ENCODE measurements at regions of chr5 and their contacts with region 1.

Region 1: DNA sequence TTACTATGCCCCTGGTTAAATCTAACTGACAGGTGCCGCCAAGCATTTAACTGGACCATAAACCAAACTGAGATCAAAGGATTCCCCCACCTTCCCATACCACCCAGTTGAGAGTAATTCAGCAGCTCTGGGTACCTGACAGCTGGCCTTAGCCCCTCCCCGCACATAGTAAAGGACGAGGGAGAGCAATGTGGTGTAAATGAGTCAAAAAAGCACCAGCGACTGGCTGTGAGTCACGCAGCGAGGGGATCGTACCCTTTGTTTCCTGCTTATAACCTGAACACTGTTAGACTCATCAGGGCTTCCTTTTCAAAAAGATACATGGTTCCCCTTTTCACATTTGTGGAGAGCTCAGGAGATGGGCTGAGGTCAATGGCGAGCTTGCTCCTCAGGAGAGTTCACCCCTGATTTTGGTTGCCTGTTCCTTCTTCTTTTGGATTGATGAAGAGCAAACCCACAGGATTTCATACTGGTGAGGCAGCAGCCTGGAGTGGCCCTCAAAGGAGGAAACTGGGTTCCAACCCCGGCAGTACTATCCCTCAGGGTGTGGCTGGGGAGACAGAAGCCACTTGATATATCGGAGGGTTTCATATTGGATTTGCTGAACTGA is 71.5 kb downstream of the ANKRD33B start:
- DNase-seq: peak; percentile 93
- H3K4me3 Mint-ChIP-seq: peak overlapping the region; percentile 77
- H3K27ac Mint-ChIP-seq: peak overlapping the region; percentile 98
- H3K4me1 Mint-ChIP-seq: peaks cover 62% of the 10 kb centered on the region
- H3K27me3 Mint-ChIP-seq: no peaks in the 10 kb centered on the region

Region 2: DNA sequence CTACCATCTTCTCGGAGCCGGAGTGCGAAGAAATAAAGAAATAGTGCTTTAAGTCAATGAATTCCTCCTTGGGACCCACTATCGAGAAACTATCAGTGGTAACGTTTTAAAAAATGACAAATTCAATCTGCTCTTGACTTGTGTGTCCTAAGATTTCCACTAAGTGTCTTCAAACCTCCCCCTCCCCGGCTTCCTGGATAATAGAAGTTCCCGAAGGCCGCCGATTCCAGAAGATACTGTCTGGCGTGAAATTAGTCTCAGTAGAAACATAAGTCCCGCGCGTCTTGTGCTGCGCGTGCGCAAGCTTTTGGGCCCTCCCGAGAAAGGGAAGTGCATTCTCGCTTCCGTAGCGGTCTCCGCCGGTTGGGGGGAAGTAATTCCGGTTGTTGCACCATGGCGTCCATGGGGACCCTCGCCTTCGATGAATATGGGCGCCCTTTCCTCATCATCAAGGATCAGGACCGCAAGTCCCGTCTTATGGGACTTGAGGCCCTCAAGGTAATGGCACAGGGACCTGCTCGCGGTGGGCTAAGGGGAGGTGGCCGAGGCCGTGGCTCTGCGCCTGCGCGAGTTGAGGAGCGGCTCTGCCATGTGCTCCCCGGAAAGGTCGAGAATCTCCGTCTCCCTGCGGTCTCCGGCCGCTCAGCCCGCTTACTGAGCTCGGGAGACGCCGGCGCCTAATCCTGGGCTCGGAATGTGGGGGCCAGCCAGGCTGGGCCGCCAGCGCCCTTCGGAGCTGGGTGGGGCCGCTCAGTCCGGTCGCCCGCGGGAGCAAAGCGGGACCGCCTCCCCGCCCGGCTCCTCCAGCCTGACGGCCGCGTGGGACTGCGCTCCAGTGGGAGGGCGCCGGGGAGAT is 385.2 kb before region 1 on chr5 and contains the start of gene CCT5:
- CTCF ChIA-PET with region 1: no interaction called
- POLR2A ChIA-PET with region 1: interaction called, 4 read pairs
- intact Hi-C with region 1: loop called (anchors 5 kb)
- DNase-seq: peak; percentile 93
- H3K4me3 Mint-ChIP-seq: peak within 1 kb of the TSS; percentile 84
- H3K27ac Mint-ChIP-seq: peak within 1 kb of the TSS; percentile 99
- H3K4me1 Mint-ChIP-seq: peaks cover 47% of the 10 kb centered on the region
- H3K27me3 Mint-ChIP-seq: no peaks in the 10 kb centered on the region
- total RNA-seq, gene CCT5: 360 to 375 TPM

Region 3: GRCh38 chr5:10441083-10441991 is 194.0 kb before region 1 on chr5 and contains the start of gene ROPN1L:
- CTCF ChIA-PET with region 1: interaction called, 154 read pairs
- POLR2A ChIA-PET with region 1: no interaction called
- intact Hi-C with region 1: loop called (anchors 5 kb)
- DNase-seq: peak; percentile 86
- H3K4me3 Mint-ChIP-seq: peak within 1 kb of the TSS; percentile 78
- H3K27ac Mint-ChIP-seq: no peak within 1 kb of the TSS
- H3K4me1 Mint-ChIP-seq: peaks cover 33% of the 10 kb centered on the region
- H3K27me3 Mint-ChIP-seq: no peaks in the 10 kb centered on the region
- total RNA-seq, gene ROPN1L: not detected

Region 4: DNA sequence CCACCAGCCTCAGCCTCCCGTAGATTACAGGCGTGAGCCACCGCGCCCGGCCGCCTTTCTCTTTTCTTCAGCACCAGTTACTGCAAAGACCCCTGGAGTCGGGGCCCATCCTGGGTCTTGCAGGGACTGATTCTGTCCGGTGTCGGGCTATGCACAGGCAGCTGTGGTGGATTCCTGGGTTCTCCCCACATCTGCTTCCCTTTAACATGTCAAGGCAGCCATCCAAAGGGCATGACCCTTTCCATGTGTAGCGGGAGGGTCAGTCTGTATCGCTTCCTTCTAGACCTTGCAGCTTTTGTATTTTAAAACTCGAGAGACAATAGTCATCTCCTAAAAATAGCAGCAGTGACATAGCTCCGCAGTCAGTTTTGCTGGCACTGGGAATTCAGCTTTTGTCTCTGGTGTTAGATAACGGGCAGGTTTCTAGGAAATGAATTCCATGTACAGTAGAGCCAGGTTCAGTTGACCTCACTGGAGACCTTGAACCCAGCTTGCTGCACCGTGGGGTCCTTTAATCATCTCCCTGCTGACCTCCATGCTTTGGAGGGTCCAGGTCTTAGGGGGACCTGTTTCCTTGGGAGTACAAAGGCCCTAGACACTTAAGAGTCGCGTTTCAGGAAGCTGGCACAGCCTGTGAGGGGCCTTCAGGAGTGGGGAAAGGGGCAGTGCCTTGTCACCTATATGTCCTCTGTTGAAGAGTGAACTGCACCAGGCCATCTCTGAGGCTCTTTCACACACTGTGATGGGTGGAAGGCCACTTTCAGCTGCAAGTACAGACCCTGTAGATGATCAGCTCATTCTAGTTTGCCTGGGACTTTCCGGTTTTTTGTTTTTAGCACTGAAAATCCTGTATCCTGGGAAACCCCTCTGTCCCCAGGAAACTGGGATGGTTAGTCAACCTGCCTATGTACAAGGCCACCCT is 57.7 kb before region 1 on chr5:
- CTCF ChIA-PET with region 1: no interaction called
- POLR2A ChIA-PET with region 1: interaction called, 3 read pairs
- intact Hi-C with region 1: loop called (anchors 1 kb)
- DNase-seq: no peak
- H3K4me3 Mint-ChIP-seq: no peak overlapping the region
- H3K27ac Mint-ChIP-seq: no peak overlapping the region
- H3K4me1 Mint-ChIP-seq: peaks cover 57% of the 10 kb centered on the region
- H3K27me3 Mint-ChIP-seq: no peaks in the 10 kb centered on the region

Region 5: GRCh38 chr5:10684303-10685086 is 49.1 kb after region 1 on chr5:
- CTCF ChIA-PET with region 1: interaction called, 4 read pairs
- POLR2A ChIA-PET with region 1: no interaction called
- intact Hi-C with region 1: loop called (anchors 1 kb)
- DNase-seq: no peak
- H3K4me3 Mint-ChIP-seq: peak overlapping the region; percentile 18
- H3K27ac Mint-ChIP-seq: peak overlapping the region; percentile 72
- H3K4me1 Mint-ChIP-seq: peaks cover 21% of the 10 kb centered on the region
- H3K27me3 Mint-ChIP-seq: no peaks in the 10 kb centered on the region

Region 6: GRCh38 chr5:10761166-10761932 is 126.0 kb after region 1 on chr5 and contains the start of gene DAP:
- CTCF ChIA-PET with region 1: no interaction called
- POLR2A ChIA-PET with region 1: interaction called, 5 read pairs
- intact Hi-C with region 1: loop called (anchors 2 kb)
- DNase-seq: peak; percentile 85
- H3K4me3 Mint-ChIP-seq: peak within 1 kb of the TSS; percentile 85
- H3K27ac Mint-ChIP-seq: peak within 1 kb of the TSS; percentile 78
- H3K4me1 Mint-ChIP-seq: peaks cover 37% of the 10 kb centered on the region
- H3K27me3 Mint-ChIP-seq: no peaks in the 10 kb centered on the region
- total RNA-seq, gene DAP: 39.0 to 39.7 TPM

Region 7: DNA sequence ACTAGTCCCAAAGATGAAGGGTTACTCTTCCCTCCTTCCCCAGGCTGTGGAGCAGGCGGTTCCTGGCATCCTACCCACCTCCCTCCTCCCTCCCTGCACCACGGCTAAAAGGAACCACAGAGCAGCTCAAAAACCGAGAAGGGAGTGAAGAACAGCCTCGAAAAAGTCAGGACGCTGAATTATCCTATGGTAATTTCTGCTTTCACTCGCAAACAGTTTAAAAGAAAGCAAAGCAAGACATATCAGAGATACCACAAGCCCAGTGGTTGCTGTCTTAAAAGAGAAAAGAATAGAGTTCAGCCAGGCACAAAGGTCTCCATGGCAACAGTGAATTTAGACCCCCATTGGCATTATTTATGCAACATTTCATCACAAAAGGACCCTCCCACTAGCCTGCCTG is 953.4 kb after region 1 on chr5:
- CTCF ChIA-PET with region 1: no interaction called
- POLR2A ChIA-PET with region 1: no interaction called
- intact Hi-C with region 1: no loop called
- DNase-seq: no peak
- H3K4me3 Mint-ChIP-seq: no peak overlapping the region
- H3K27ac Mint-ChIP-seq: no peak overlapping the region
- H3K4me1 Mint-ChIP-seq: no peaks in the 10 kb centered on the region
- H3K27me3 Mint-ChIP-seq: no peaks in the 10 kb centered on the region

Measured in activated CD4-positive, alpha-beta memory T cell treated with anti-CD3 and anti-CD28 coated beads for 36 hours (primary cell).